ENCODE measurements at regions of chr12 and their contacts with region 1.

Region 1: GRCh38 chr12:70733385-70733784 is 96.2 kb upstream of the PTPRB start:
- DNase-seq: peak; percentile 71
- H3K4me3 ChIP-seq: no peak overlapping the region
- H3K27ac ChIP-seq: no peak overlapping the region
- H3K4me1 ChIP-seq: no peaks in the 10 kb centered on the region
- H3K27me3 ChIP-seq: peaks cover 0 to 7% of the 10 kb centered on the region in 2 experiments
- CTCF ChIP-seq: peak; percentile 51 to 63
- POLR2A ChIP-seq: no peak

Region 2: DNA sequence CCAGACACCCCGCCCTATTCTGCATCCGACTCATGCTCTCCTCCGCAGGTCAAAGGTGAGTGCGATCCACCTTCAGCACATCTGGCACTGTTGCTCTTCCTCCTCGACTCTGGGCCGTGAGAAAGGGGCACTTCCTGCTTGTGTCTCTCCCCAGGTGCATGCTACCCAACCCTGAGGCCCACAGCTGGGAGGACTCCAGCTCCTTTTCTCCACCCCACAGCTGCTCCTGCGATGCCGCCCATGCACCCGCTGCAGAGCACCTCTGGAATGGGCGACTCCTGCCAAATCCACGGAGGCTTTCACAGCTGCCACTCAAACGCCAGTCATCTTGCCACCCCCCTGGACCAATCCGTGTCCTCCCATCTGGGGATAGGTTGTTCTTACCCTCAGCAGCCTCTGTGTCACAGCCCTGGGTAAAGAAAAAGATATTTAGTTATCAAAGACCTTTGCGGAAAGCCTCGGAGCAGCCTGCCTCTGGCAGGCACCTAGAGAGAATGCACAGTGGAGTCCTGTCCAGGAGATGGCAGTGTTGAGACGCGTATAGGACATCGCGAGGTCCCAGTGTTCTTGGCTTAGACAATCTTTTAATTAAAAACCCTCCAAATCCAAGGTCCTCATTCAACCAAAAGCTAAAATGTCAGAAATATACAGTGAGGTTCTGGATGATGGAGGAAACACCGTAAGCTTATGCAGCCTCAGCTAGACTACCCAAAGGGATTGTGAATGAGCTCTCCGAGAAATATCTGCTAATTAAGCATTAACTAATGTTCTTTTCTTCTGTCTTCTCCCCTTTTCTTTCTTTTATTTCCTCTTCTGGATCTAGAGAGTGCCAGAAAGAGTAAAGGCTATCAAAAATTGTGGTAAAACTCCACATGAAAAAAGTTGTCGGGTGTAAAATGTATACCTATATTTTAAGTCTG is 854.1 kb before region 1 on chr12:
- CTCF ChIA-PET with region 1: interaction called, 61 read pairs
- POLR2A ChIA-PET with region 1: no interaction called
- dilution Hi-C with region 1: no loop called
- intact Hi-C with region 1: loop called (anchors 1 kb)
- DNase-seq: peak; percentile 76
- H3K4me3 ChIP-seq: no peak overlapping the region
- H3K27ac ChIP-seq: no peak overlapping the region
- H3K4me1 ChIP-seq: no peaks in the 10 kb centered on the region
- H3K27me3 ChIP-seq: no peaks in the 10 kb centered on the region
- CTCF ChIP-seq: peak; percentile 87
- POLR2A ChIP-seq: no peak

Region 3: GRCh38 chr12:70402600-70402999 is 330.8 kb before region 1 on chr12:
- CTCF ChIA-PET with region 1: interaction called, 3 read pairs
- POLR2A ChIA-PET with region 1: no interaction called
- dilution Hi-C with region 1: no loop called
- intact Hi-C with region 1: loop called (anchors 5 kb)
- DNase-seq: no peak
- H3K4me3 ChIP-seq: no peak overlapping the region
- H3K27ac ChIP-seq: no peak overlapping the region
- H3K4me1 ChIP-seq: no peaks in the 10 kb centered on the region
- H3K27me3 ChIP-seq: peaks cover 2 to 4% of the 10 kb centered on the region in 2 experiments
- CTCF ChIP-seq: no peak
- POLR2A ChIP-seq: no peak

Region 4: GRCh38 chr12:70744133-70744532 is 10.7 kb after region 1 on chr12:
- CTCF ChIA-PET with region 1: interaction called, 14 read pairs
- POLR2A ChIA-PET with region 1: no interaction called
- dilution Hi-C with region 1: no loop called
- intact Hi-C with region 1: no loop called
- DNase-seq: no peak
- H3K4me3 ChIP-seq: no peak overlapping the region
- H3K27ac ChIP-seq: no peak overlapping the region
- H3K4me1 ChIP-seq: no peaks in the 10 kb centered on the region
- H3K27me3 ChIP-seq: peaks cover 9 to 17% of the 10 kb centered on the region in 2 experiments
- CTCF ChIP-seq: no peak
- POLR2A ChIP-seq: no peak

Region 5: DNA sequence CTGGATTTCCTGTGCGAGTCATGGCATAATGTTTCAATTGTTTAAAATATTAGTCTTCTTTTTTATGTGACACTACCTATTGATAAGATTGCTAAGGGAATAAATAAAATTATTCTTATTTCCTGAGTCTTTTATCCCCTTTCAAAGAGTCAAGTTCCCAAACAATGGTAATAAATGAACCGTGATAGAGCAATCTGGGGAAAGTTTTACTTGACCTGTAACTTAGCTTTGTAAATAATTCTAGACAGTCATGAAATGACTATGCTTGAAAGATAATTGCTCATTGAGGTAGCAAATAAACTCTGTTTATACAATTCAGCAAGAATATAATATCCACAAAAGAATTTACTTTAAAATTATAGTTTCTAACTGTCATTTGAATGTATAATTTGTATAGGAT is 342.4 kb after region 1 on chr12:
- CTCF ChIA-PET with region 1: no interaction called
- POLR2A ChIA-PET with region 1: no interaction called
- dilution Hi-C with region 1: no loop called
- intact Hi-C with region 1: no loop called
- DNase-seq: no peak
- H3K4me3 ChIP-seq: no peak overlapping the region
- H3K27ac ChIP-seq: no peak overlapping the region
- H3K4me1 ChIP-seq: no peaks in the 10 kb centered on the region
- H3K27me3 ChIP-seq: no peaks in the 10 kb centered on the region
- CTCF ChIP-seq: no peak
- POLR2A ChIP-seq: no peak

Region 6: GRCh38 chr12:71392521-71393145 is 659.2 kb after region 1 on chr12:
- CTCF ChIA-PET with region 1: interaction called, 58 read pairs
- POLR2A ChIA-PET with region 1: no interaction called
- dilution Hi-C with region 1: no loop called
- intact Hi-C with region 1: loop called (anchors 1 kb)
- DNase-seq: peak; percentile 76
- H3K4me3 ChIP-seq: no peak overlapping the region
- H3K27ac ChIP-seq: no peak overlapping the region
- H3K4me1 ChIP-seq: no peaks in the 10 kb centered on the region
- H3K27me3 ChIP-seq: no peaks in the 10 kb centered on the region
- CTCF ChIP-seq: peak; percentile 62 to 73
- POLR2A ChIP-seq: no peak